Endothelial cell of umbilical vein (primary cell): ENCODE measurements at regions of chr6 and their contacts with region 1.

Region 1: GRCh38 chr6:16216501-16217155 is 21.8 kb upstream of the GMPR start:
- DNase-seq: peak; percentile 41
- H3K4me3 ChIP-seq: no peak overlapping the region
- H3K27ac ChIP-seq: peak overlapping the region; percentile 99
- H3K4me1 ChIP-seq: peaks cover 28% of the 10 kb centered on the region
- H3K27me3 ChIP-seq: no peaks in the 10 kb centered on the region
- CTCF ChIP-seq: no peak
- POLR2A ChIP-seq: no peak

Region 2: GRCh38 chr6:15936503-15936902 is 280.1 kb before region 1 on chr6:
- CTCF ChIA-PET with region 1: no interaction called
- POLR2A ChIA-PET with region 1: no interaction called
- dilution Hi-C with region 1: no loop called
- intact Hi-C with region 1: no loop called
- DNase-seq: no peak
- H3K4me3 ChIP-seq: no peak overlapping the region
- H3K27ac ChIP-seq: no peak overlapping the region
- H3K4me1 ChIP-seq: peaks cover 5% of the 10 kb centered on the region
- H3K27me3 ChIP-seq: no peaks in the 10 kb centered on the region
- CTCF ChIP-seq: no peak
- POLR2A ChIP-seq: no peak

Region 3: GRCh38 chr6:16007146-16007545 is 209.5 kb before region 1 on chr6:
- CTCF ChIA-PET with region 1: no interaction called
- POLR2A ChIA-PET with region 1: no interaction called
- dilution Hi-C with region 1: no loop called
- intact Hi-C with region 1: no loop called
- DNase-seq: no peak
- H3K4me3 ChIP-seq: no peak overlapping the region
- H3K27ac ChIP-seq: no peak overlapping the region
- H3K4me1 ChIP-seq: no peaks in the 10 kb centered on the region
- H3K27me3 ChIP-seq: peaks cover 0 to 4% of the 10 kb centered on the region in 2 experiments
- CTCF ChIP-seq: no peak
- POLR2A ChIP-seq: no peak

Region 4: DNA sequence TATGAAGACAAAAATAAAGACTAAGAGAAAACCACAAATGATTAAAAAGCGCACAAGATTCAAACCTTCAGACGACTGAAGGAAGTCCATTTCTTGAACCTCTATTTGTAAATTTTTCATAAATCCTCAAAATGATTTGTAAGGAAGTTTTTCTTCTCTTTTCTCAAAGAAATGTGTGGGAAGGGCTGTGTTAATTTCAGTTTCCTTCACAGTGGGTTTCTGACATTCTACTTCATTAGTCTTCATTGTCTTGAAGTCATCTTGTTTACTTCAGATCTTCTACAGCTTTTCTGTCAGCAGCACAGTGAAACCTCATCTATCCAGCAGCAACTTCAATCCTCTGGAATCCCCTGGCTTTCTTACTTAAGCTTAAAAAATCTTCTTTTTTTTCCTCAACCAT is 175.3 kb before region 1 on chr6:
- CTCF ChIA-PET with region 1: no interaction called
- POLR2A ChIA-PET with region 1: no interaction called
- dilution Hi-C with region 1: no loop called
- intact Hi-C with region 1: no loop called
- DNase-seq: no peak
- H3K4me3 ChIP-seq: no peak overlapping the region
- H3K27ac ChIP-seq: no peak overlapping the region
- H3K4me1 ChIP-seq: no peaks in the 10 kb centered on the region
- H3K27me3 ChIP-seq: no peaks in the 10 kb centered on the region
- CTCF ChIP-seq: no peak
- POLR2A ChIP-seq: no peak

Region 5: GRCh38 chr6:16174368-16175078 is 42.1 kb before region 1 on chr6:
- CTCF ChIA-PET with region 1: no interaction called
- POLR2A ChIA-PET with region 1: no interaction called
- dilution Hi-C with region 1: no loop called
- intact Hi-C with region 1: no loop called
- DNase-seq: no peak
- H3K4me3 ChIP-seq: no peak overlapping the region
- H3K27ac ChIP-seq: no peak overlapping the region
- H3K4me1 ChIP-seq: no peaks in the 10 kb centered on the region
- H3K27me3 ChIP-seq: peaks cover 9% of the 10 kb centered on the region in 2 experiments
- CTCF ChIP-seq: no peak
- POLR2A ChIP-seq: no peak

Region 6: DNA sequence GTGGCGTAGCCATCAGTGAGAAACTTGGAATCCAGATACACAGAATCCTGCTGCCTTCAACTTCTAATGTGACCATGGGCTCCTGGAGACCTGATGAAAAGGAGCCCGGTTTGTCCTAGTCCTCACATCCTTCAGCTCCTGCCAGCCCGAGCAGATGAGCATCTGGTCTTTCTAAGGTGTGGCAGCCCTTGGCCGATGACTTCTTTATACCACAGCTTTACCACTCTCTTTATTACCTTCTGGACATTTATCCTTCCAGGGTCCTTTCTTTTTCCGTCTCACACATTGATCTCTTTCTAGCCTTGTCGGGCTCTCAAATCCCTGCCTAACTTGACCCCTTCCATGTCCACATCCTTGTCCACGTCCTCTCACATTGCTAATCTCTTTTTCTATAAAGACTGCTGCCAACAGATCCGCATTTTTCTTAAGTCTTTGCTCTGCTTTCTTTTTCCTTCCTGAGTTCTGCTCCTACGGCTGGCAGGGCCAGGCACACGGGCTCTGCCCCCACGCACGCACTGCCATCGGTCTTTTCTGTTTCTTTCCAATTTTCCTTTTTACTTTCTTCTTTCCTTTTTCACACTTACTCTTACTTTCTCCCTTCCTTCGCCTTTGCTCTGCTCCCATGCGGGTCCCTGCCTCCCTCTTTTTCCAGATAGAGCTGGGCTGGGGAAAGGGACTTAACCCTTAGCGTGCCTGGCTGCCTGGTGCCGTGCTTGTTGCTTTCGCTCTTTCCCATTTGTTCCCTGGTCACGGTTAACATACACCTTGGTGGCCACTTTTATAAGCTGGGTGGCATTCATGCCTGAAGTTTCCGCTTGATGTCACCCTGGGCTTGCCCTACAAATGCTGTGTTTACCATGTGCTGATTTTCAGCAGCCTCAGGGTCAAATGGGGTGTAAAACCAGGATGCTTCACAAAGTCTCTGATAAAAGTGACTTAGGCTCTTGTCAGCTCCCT is 12.4 kb after region 1 on chr6:
- CTCF ChIA-PET with region 1: interaction called, 12 read pairs
- POLR2A ChIA-PET with region 1: no interaction called
- dilution Hi-C with region 1: no loop called
- intact Hi-C with region 1: no loop called
- DNase-seq: peak; percentile 34
- H3K4me3 ChIP-seq: peak overlapping the region in 1 of 3 experiments; percentile 3
- H3K27ac ChIP-seq: no peak overlapping the region
- H3K4me1 ChIP-seq: peaks cover 7% of the 10 kb centered on the region
- H3K27me3 ChIP-seq: peaks cover 0 to 3% of the 10 kb centered on the region in 2 experiments
- CTCF ChIP-seq: no peak
- POLR2A ChIP-seq: no peak

Region 7: DNA sequence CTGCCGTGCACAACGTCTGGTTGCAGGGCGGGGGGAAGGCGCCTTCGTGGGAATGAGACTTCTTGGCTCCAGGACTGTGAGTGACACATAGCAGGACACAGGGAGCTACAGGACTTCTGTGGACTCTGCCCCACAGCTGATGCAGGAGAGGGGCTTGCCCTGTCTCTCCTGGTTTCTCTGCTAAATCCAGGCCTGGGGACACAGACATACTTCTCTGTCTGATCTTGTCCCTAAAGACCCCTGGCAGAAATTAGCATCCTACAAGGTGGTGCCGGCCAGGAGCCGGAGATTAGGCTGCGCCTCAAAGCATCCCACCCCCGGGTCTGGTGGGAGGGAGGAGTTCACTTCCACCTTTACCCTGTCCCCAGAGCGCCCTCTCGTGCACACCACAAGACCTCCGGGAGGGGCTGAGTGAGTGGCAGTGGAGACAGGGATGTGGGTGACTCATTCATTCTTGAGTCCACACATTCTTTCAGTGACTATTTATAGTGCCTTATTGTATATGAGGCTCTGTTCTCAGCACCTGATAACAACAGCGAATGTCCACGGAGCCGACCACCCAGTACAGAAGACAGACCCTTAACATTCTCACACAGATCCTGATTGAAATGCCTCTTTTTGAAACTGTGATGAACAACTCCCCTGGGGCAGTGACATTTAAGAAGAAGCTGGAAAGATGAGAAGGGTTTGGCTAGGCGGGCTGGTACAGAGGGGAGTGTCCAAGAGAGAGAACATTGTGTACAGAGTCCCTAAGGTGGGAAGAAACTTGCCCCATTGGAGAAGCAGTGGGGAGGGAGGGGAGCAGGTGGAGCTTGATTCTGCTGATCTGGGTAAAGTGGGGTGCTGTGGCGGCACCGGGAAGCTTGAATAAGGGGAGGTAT is 60.7 kb after region 1 on chr6:
- CTCF ChIA-PET with region 1: interaction called, 6 read pairs
- POLR2A ChIA-PET with region 1: no interaction called
- dilution Hi-C with region 1: no loop called
- intact Hi-C with region 1: loop called (anchors 1 kb)
- DNase-seq: peak; percentile 96
- H3K4me3 ChIP-seq: no peak overlapping the region
- H3K27ac ChIP-seq: peak overlapping the region; percentile 73
- H3K4me1 ChIP-seq: peaks cover 9% of the 10 kb centered on the region
- H3K27me3 ChIP-seq: no peaks in the 10 kb centered on the region
- CTCF ChIP-seq: peak; percentile 79 to 80
- POLR2A ChIP-seq: no peak